Mammary epithelial cell (primary cell): ENCODE measurements at regions of chr14 and their contacts with region 1.

Region 1: DNA sequence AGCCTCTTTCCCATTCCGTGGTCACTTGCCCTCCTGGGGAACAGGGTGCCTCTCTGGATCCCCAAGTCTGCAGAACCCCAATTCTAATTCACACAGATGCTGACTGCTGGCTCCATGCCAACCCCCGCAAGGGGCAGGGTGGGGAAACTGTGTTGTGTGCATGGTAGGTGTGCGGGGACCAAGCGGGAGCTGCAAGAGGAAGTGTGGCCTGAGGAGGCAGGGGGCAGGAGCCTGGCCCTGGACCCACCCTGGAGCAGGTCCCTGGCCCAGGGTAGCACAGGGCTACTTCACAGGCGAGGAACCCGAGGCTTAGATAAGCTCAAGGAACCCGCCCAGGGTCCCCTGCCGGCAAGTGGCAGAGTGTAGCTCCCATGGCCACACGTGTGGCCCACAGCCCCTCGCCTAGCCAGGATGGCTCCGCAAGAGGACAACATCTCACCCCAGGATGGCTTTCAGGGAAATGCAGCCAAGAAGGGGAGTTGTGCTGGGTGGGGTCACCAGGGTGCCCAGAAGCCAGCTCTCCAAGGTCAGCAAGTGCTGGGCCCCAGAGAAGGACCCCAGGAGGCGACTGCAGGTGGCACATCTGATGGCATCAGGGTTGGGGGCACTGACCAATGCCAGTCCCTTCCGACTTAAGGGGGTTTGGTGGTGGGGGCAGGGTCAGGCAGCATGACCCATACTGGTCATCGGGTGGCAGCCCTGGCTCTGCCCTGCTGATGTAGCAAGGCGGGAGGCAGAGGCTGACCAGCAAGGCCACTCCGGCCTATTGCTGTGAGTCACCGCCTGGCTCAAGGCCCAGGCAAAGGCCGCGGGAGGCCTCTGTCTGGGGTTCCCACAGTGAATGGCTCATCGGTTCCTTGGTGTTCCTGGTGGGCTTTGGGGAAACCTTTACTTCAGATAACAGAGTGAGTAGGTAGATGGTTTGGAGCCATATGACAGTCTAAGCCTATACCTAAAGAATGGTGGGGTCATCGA is 37.3 kb upstream of the EML1 start:
- DNase-seq: peak; percentile 56
- H3K4me3 ChIP-seq: no peak overlapping the region
- H3K27ac ChIP-seq: no peak overlapping the region
- H3K4me1 ChIP-seq: peaks cover 24% of the 10 kb centered on the region
- H3K27me3 ChIP-seq: no peaks in the 10 kb centered on the region
- CTCF ChIP-seq: no peak

Region 2: GRCh38 chr14:99541677-99542470 is 214.0 kb before region 1 on chr14:
- CTCF ChIA-PET with region 1: no interaction called
- dilution Hi-C with region 1: loop called (anchors 10 kb)
- in situ Hi-C with region 1: no loop called
- intact Hi-C with region 1: no loop called
- DNase-seq: no peak
- H3K4me3 ChIP-seq: no peak overlapping the region
- H3K27ac ChIP-seq: no peak overlapping the region
- H3K4me1 ChIP-seq: peaks cover 26% of the 10 kb centered on the region
- H3K27me3 ChIP-seq: no peaks in the 10 kb centered on the region
- CTCF ChIP-seq: no peak

Region 3: DNA sequence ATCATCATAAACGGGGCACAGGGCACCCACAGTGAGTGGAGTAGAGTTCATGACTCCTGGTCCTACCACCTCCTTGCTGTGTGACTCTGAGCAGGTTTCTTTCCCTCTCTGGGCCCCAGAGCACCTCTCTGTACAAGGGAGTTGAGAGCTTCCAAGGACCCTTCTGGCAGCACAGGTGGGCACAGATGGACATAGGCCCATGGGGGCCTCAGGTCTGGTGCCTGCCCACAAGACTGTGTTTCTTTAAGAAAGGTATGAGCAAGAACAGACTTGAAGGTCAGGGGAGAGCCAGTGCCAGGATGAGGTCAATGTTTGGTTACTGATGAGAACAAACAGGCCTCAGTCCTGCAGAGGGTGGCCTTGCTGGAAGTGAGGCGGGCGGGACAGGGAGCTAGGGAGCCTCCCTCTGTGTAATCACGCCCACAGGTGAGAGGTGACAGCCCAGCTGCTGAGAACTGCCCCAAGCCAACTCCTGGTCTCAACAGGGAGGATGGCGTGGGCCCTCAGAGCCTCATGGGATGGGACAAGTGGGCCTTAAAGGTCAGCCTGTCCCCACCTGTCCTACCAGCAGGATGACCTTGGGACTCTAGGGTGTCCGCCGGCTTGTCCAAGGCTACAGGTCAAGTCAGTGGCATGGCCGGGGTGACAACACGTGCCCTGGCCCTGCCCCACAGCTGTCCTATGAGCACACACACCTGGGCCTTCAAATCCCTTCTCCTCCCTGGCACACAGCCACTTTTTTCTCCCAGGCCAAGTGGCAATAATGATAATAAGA is 201.0 kb before region 1 on chr14:
- CTCF ChIA-PET with region 1: no interaction called
- dilution Hi-C with region 1: no loop called
- in situ Hi-C with region 1: no loop called
- intact Hi-C with region 1: no loop called
- DNase-seq: peak; percentile 28
- H3K4me3 ChIP-seq: no peak overlapping the region
- H3K27ac ChIP-seq: no peak overlapping the region
- H3K4me1 ChIP-seq: peaks cover 13% of the 10 kb centered on the region
- H3K27me3 ChIP-seq: no peaks in the 10 kb centered on the region
- CTCF ChIP-seq: no peak

Region 4: DNA sequence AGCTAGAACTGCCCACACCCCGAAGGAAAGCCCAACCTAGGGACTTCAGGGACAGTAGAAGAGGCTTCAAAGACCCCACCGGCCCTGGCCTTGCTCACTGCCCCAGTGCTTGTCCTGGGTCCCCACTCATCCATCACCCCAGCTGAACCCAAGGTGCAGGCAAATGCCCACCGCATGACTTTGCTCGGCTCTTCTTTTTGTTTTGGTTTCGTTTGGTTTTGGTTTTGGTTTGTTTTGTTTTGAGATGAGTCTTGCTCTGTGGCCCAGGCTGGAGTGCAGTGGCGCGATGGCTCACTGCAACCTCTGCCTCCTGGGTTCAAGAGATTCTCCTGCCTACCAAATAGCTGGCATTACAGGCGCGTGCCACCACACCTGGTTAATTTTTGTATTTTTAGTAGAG is 160.9 kb before region 1 on chr14:
- CTCF ChIA-PET with region 1: no interaction called
- dilution Hi-C with region 1: no loop called
- in situ Hi-C with region 1: no loop called
- intact Hi-C with region 1: no loop called
- DNase-seq: no peak
- H3K4me3 ChIP-seq: no peak overlapping the region
- H3K27ac ChIP-seq: no peak overlapping the region
- H3K4me1 ChIP-seq: peaks cover 13% of the 10 kb centered on the region
- H3K27me3 ChIP-seq: no peaks in the 10 kb centered on the region
- CTCF ChIP-seq: no peak

Region 5: DNA sequence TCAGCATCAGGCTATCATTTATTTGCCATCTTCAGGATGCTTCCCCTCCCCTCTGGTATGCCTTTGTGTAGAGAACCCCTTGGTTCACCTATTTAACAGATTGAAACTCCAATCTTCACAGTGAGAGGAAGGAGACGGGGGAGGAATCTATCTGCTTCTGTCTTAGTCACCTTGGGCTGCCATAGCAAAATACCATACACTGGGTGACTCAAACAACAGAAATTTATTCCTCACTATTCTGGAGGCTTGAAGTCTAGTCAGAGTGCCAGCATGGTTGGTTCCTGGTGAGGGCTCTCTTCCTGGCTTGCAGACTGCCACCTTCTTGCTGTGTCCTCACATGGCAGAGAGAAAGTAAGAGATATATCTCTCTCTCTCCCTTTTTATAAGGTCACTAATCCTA is 23.8 kb after region 1 on chr14:
- CTCF ChIA-PET with region 1: no interaction called
- dilution Hi-C with region 1: no loop called
- in situ Hi-C with region 1: no loop called
- intact Hi-C with region 1: loop called (anchors 2 kb)
- DNase-seq: peak; percentile 63
- H3K4me3 ChIP-seq: no peak overlapping the region
- H3K27ac ChIP-seq: no peak overlapping the region
- H3K4me1 ChIP-seq: no peaks in the 10 kb centered on the region
- H3K27me3 ChIP-seq: no peaks in the 10 kb centered on the region
- CTCF ChIP-seq: no peak

Region 6: GRCh38 chr14:100012402-100013327 is 256.7 kb after region 1 on chr14:
- CTCF ChIA-PET with region 1: no interaction called
- dilution Hi-C with region 1: no loop called
- in situ Hi-C with region 1: no loop called
- intact Hi-C with region 1: no loop called
- DNase-seq: peak; percentile 60
- H3K4me3 ChIP-seq: no peak overlapping the region
- H3K27ac ChIP-seq: no peak overlapping the region
- H3K4me1 ChIP-seq: no peaks in the 10 kb centered on the region
- H3K27me3 ChIP-seq: no peaks in the 10 kb centered on the region
- CTCF ChIP-seq: no peak